Mammary epithelial cell (primary cell): ENCODE measurements at regions of chr12 and their contacts with region 1.

Region 1: GRCh38 chr12:43338848-43339526 is 213.0 kb downstream of the ADAMTS20 start:
- DNase-seq: peak; percentile 48
- H3K4me3 ChIP-seq: no peak overlapping the region
- H3K27ac ChIP-seq: peak overlapping the region; percentile 23
- H3K4me1 ChIP-seq: peaks cover 30% of the 10 kb centered on the region
- H3K27me3 ChIP-seq: no peaks in the 10 kb centered on the region
- CTCF ChIP-seq: peak; percentile 63 to 88

Region 2: GRCh38 chr12:41684997-41685396 is 1654.0 kb before region 1 on chr12:
- CTCF ChIA-PET with region 1: no interaction called
- dilution Hi-C with region 1: no loop called
- in situ Hi-C with region 1: no loop called
- intact Hi-C with region 1: loop called (anchors 10 kb)
- DNase-seq: no peak
- H3K4me3 ChIP-seq: no peak overlapping the region
- H3K27ac ChIP-seq: no peak overlapping the region
- H3K4me1 ChIP-seq: no peaks in the 10 kb centered on the region
- H3K27me3 ChIP-seq: peaks cover 2% of the 10 kb centered on the region
- CTCF ChIP-seq: peak in 1 of 2 donors; percentile 39

Region 3: GRCh38 chr12:42129595-42130204 is 1209.3 kb before region 1 on chr12:
- CTCF ChIA-PET with region 1: no interaction called
- dilution Hi-C with region 1: no loop called
- in situ Hi-C with region 1: no loop called
- intact Hi-C with region 1: loop called (anchors 5 kb)
- DNase-seq: peak; percentile 61
- H3K4me3 ChIP-seq: no peak overlapping the region
- H3K27ac ChIP-seq: peak overlapping the region; percentile 75
- H3K4me1 ChIP-seq: peaks cover 25% of the 10 kb centered on the region
- H3K27me3 ChIP-seq: no peaks in the 10 kb centered on the region
- CTCF ChIP-seq: peak; percentile 80 to 88

Region 4: GRCh38 chr12:42325653-42326474 is 1013.1 kb before region 1 on chr12 and contains the starts of genes PPHLN1 and ZCRB1:
- CTCF ChIA-PET with region 1: no interaction called
- dilution Hi-C with region 1: no loop called
- in situ Hi-C with region 1: no loop called
- intact Hi-C with region 1: loop called (anchors 10 kb)
- DNase-seq: peak; percentile 83
- H3K4me3 ChIP-seq: peak within 1 kb of the TSS; percentile 64 to 88 (median 77)
- H3K27ac ChIP-seq: peak within 1 kb of the TSS; percentile 88
- H3K4me1 ChIP-seq: peaks cover 13% of the 10 kb centered on the region
- H3K27me3 ChIP-seq: no peaks in the 10 kb centered on the region
- CTCF ChIP-seq: no peak
- total RNA-seq, gene PPHLN1: 64.2 to 74.3 TPM
- total RNA-seq, gene ZCRB1: 24.5 to 49.0 TPM

Region 5: GRCh38 chr12:42574851-42575266 is 764.1 kb before region 1 on chr12:
- CTCF ChIA-PET with region 1: interaction called, 3 read pairs
- dilution Hi-C with region 1: no loop called
- in situ Hi-C with region 1: no loop called
- intact Hi-C with region 1: loop called (anchors 5 kb)
- DNase-seq: no peak
- H3K4me3 ChIP-seq: no peak overlapping the region
- H3K27ac ChIP-seq: no peak overlapping the region
- H3K4me1 ChIP-seq: peaks cover 1% of the 10 kb centered on the region
- H3K27me3 ChIP-seq: no peaks in the 10 kb centered on the region
- CTCF ChIP-seq: no peak

Region 6: DNA sequence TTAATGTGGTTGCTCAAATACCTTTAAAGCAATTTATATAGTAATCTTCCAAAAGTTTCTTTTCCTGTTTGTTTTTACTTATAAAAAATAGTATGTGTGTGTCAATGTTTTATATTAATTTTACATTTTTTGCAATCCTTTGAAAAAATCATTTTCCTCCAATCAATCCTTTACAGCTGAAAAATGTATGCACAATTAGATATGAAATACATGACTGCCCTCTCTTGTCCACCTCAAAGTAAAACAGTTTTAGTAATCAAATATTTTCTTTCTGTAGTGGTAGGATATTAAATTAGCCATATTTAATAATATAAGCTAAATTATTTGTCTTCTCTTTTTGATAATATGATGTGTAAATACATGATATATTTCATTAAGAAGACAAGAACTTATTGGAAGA is 56.9 kb before region 1 on chr12:
- CTCF ChIA-PET with region 1: no interaction called
- dilution Hi-C with region 1: no loop called
- in situ Hi-C with region 1: no loop called
- intact Hi-C with region 1: loop called (anchors 1 kb)
- DNase-seq: no peak
- H3K4me3 ChIP-seq: no peak overlapping the region
- H3K27ac ChIP-seq: no peak overlapping the region
- H3K4me1 ChIP-seq: peaks cover 35% of the 10 kb centered on the region
- H3K27me3 ChIP-seq: no peaks in the 10 kb centered on the region
- CTCF ChIP-seq: peak; percentile 36 to 48